ENCODE measurements at regions of chr1 and their contacts with region 1.

Region 1: GRCh38 chr1:180178511-180179161 is 24.0 kb downstream of the QSOX1 start:
- DNase-seq: peak; percentile 64 to 80
- H3K4me3 ChIP-seq: no peak overlapping the region
- H3K4me3 Mint-ChIP-seq: no peak overlapping the region
- H3K27ac Mint-ChIP-seq: no peak overlapping the region
- H3K4me1 ChIP-seq: no peaks in the 10 kb centered on the region
- H3K4me1 Mint-ChIP-seq: no peaks in the 10 kb centered on the region
- H3K27me3 ChIP-seq: no peaks in the 10 kb centered on the region
- H3K27me3 Mint-ChIP-seq: no peaks in the 10 kb centered on the region
- CTCF ChIP-seq: peak; percentile 92 to 98

Region 2: DNA sequence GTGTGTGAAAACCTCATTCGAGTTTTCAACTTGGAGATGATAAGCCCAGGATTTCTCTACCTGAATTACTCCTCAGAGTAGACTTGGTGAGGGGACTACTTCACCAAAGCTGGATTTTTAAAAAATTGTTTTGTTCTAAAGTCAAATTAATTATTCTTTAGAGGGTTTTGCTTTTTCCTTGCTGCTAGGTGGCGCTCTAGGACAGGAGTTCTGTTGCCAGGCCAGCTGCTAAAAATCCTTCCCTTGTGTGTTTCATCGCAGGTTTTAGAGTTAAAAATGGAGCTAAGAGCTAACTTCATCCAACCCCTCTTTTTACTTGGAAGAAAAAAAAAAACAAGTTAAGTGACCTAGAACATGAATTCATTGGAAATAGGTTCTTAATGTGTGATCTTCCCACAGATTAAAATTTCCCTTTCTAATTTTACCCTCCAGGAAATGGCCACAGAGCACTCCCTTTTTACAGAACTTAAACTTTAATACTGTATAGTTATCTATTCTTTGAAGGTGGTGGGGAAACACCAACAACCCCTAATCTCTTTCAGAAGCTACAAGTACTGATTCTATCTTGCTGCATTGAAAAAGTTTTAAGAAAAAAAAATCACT is 472.2 kb before region 1 on chr1:
- CTCF ChIA-PET with region 1: interaction called, 13 read pairs
- POLR2A ChIA-PET with region 1: no interaction called
- intact Hi-C with region 1: loop called (anchors 1 kb)
- DNase-seq: peak; percentile 47 to 69
- H3K4me3 ChIP-seq: no peak overlapping the region
- H3K4me3 Mint-ChIP-seq: no peak overlapping the region
- H3K27ac Mint-ChIP-seq: no peak overlapping the region
- H3K4me1 ChIP-seq: peaks cover 8% of the 10 kb centered on the region
- H3K4me1 Mint-ChIP-seq: peaks cover 8% of the 10 kb centered on the region
- H3K27me3 ChIP-seq: no peaks in the 10 kb centered on the region
- H3K27me3 Mint-ChIP-seq: peaks cover 14% of the 10 kb centered on the region
- CTCF ChIP-seq: peak; percentile 75 to 80

Region 3: DNA sequence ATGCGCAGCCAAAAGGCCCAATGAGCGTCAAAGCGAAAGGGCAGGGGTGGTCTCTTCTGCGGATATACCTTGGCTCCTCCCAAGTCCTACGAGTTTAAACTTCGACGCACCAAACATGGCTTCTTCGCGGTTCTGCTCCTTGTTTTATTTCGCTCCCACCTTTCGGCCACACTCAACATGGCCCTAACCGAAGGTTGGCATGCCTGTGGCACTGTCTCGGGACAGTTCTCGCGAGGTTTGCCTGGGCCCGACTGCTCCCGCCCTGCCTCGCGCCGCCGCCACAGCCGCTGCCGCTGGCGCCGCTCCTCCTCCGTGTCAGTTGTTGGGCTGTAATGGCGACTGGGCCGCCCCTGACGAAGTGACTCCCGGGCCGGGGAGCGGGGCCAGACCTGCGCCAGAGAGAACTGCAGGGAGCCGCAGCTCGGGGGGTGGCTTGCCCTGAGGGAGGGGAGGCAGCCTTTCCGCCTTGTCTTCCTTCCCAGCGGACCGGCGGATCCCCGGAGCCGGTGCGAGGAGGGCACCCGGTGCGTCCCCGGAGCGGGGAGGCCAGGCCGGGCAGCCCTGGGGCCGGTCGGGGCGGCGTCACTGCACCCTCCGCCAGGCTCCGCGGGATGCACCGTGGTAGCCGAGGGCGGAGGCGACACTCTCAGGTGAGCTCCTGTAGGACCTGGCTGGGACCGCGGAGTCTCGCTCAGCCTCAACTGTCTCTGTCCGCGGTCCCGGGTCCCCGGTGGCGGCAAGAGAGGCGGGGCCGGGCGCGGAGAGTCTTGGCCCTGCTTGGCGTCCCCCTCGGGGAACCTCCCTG is 223.9 kb before region 1 on chr1 and contains the start of gene CEP350:
- CTCF ChIA-PET with region 1: no interaction called
- POLR2A ChIA-PET with region 1: no interaction called
- intact Hi-C with region 1: loop called (anchors 5 kb)
- DNase-seq: peak; percentile 98 to 99
- H3K4me3 ChIP-seq: peak within 1 kb of the TSS; percentile 73
- H3K4me3 Mint-ChIP-seq: peak within 1 kb of the TSS; percentile 83
- H3K27ac Mint-ChIP-seq: peak within 1 kb of the TSS; percentile 30
- H3K4me1 ChIP-seq: 0 out of 2 replicates have a peak, but pooled peaks cover 8% of the 10 kb centered on the region
- H3K4me1 Mint-ChIP-seq: peaks cover 14% of the 10 kb centered on the region
- H3K27me3 ChIP-seq: no peaks in the 10 kb centered on the region
- H3K27me3 Mint-ChIP-seq: no peaks in the 10 kb centered on the region
- CTCF ChIP-seq: no peak
- total RNA-seq, gene CEP350: 40.3 and 43.5 TPM in 2 replicates

Region 4: GRCh38 chr1:180116964-180117763 is 61.5 kb before region 1 on chr1:
- CTCF ChIA-PET with region 1: interaction called, 3 read pairs
- POLR2A ChIA-PET with region 1: no interaction called
- intact Hi-C with region 1: loop called (anchors 2 kb)
- DNase-seq: peak; percentile 12 to 50
- H3K4me3 ChIP-seq: no peak overlapping the region
- H3K4me3 Mint-ChIP-seq: no peak overlapping the region
- H3K27ac Mint-ChIP-seq: no peak overlapping the region
- H3K4me1 ChIP-seq: 0 out of 2 replicates have a peak, but pooled peaks cover 5% of the 10 kb centered on the region
- H3K4me1 Mint-ChIP-seq: peaks cover 7% of the 10 kb centered on the region
- H3K27me3 ChIP-seq: no peaks in the 10 kb centered on the region
- H3K27me3 Mint-ChIP-seq: no peaks in the 10 kb centered on the region
- CTCF ChIP-seq: no peak

Region 5: GRCh38 chr1:180773210-180773865 is 594.7 kb after region 1 on chr1:
- CTCF ChIA-PET with region 1: no interaction called
- POLR2A ChIA-PET with region 1: no interaction called
- intact Hi-C with region 1: no loop called
- DNase-seq: no peak
- H3K4me3 ChIP-seq: no peak overlapping the region
- H3K4me3 Mint-ChIP-seq: no peak overlapping the region
- H3K27ac Mint-ChIP-seq: no peak overlapping the region
- H3K4me1 ChIP-seq: 0 out of 2 replicates have a peak, but pooled peaks cover 12% of the 10 kb centered on the region
- H3K4me1 Mint-ChIP-seq: peaks cover 19% of the 10 kb centered on the region
- H3K27me3 ChIP-seq: no peaks in the 10 kb centered on the region
- H3K27me3 Mint-ChIP-seq: no peaks in the 10 kb centered on the region
- CTCF ChIP-seq: no peak

Measured in Caco-2 (cell line).